Left colon (tissue), 2 donors: ENCODE measurements at regions of chr15 and their contacts with region 1.

Region 1: GRCh38 chr15:89893696-89894455 is at the start of gene AP3S2:
- DNase-seq: peak; percentile 92
- ATAC-seq: peak; percentile 92
- total RNA-seq, gene AP3S2: 54.0 to 59.3 TPM

Region 2: DNA sequence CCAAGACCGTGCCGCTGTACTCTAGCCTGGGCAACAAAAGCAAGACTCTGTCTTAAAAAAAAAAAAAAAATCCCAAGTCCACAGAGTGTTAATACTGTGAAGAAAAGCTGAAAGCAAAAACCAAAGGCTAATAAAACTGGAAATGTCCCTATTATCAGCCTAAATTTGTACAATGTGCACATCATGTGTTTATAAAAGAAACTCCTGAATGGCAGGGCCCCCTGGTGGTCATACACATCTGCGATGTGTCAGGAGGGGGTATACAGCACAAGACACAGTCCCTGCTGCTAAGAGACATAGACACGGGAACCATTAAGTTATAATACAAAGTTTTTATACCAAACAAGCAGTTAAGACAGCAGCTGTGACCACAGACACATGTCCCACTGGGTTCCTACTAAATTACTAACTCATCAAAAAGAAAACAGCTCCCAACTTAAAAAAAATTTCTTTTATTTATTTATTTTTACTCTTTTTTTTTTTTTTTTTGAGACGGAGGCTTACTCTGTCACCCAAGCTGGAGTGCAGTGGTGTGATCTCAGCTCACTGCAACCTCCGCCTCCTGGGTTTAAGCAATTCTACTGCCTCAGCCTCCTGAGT is 177.4 kb after region 1 on chr15:
- intact Hi-C with region 1: loop called in 1 of 2 experiments (anchors 10 kb)
- DNase-seq: peak; percentile 83 to 93
- ATAC-seq: peak; percentile 74